A549 (cell line): ENCODE measurements at regions of chr3 and their contacts with region 1.

Region 1: DNA sequence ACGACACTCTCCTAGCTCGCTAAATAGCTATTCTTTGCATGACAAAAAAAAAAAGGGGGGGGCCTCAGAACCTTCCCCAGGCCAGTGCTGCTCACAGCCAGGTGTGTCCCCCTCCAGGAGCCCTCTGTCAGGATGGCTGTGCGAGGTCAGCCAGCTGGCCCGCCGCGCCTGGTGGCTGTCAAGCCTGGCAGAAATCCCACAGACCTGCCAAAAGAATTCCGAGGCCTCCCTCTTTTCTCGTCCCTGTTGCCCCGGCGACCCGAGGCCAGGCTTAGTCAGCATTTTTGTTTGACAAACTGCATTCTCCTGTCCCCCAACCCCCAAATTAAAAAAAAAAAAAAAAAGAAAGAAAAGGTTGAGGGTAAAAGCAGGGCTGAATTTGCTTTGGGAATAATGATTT is 61.9 kb downstream of the TM4SF4 start:
- DNase-seq: peak in 1 of 2 experiments; percentile 55
- ATAC-seq: peak; percentile 8 to 11; a peak in 3 of 6 replicates
- H3K4me3 ChIP-seq: peak overlapping the region; percentile 25; the same call in 1 of the 3 replicates
- H3K27ac ChIP-seq: peak overlapping the region; percentile 82 to 84
- H3K4me1 ChIP-seq: peaks cover 100% of the 10 kb centered on the region
- CTCF ChIP-seq: no peak
- EP300 ChIP-seq: 0 out of 5 replicates have a peak, but pooled peaks of 1 of the 2 experiments have one; percentile 12
- POLR2A ChIP-seq: no peak
- RAD21 ChIP-seq: no peak

Region 2: GRCh38 chr3:149393345-149394160 is 142.9 kb before region 1 on chr3:
- CTCF ChIA-PET with region 1: no interaction called
- POLR2A ChIA-PET with region 1: no interaction called
- DNase-seq: peak; percentile 71 to 89
- ATAC-seq: peak; percentile 76 to 81
- H3K4me3 ChIP-seq: no peak overlapping the region
- H3K27ac ChIP-seq: peak overlapping the region; percentile 20 to 55; a peak in 5 of 6 replicates
- H3K4me1 ChIP-seq: peaks cover 72% of the 10 kb centered on the region
- CTCF ChIP-seq: peak; percentile 97
- EP300 ChIP-seq: no peak
- POLR2A ChIP-seq: no peak
- RAD21 ChIP-seq: peak; percentile 97 to 98

Region 3: DNA sequence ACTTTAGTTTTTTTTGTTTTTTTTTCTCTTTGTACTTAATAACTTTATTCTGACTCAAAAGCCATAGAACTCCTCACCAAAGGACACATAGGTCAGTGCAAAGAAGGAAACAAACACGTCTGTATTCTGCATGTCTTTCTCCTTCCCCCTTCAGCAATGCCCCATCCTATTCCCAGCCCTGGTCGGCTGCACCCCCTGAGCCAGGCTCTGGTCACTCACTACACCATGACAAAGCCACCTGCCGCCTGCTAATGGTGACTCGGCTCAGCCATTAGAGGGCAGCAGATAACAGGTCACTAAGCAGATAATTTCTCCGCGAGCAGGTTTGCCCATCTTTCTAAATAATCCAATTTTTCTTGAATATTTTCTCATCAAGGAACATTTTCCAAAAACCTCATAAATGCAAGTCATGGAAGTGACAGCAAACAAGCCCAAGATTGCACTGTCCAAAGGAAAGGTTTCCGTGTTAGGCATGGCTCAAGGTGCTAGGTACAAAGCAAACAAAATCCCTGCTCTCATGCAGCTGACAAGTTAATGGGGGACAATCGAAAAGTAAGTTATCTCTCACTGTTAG is 24.1 kb before region 1 on chr3:
- CTCF ChIA-PET with region 1: interaction called, 14 read pairs
- POLR2A ChIA-PET with region 1: no interaction called
- DNase-seq: peak; percentile 78 to 82
- ATAC-seq: peak; percentile 86 to 87
- H3K4me3 ChIP-seq: no peak overlapping the region
- H3K27ac ChIP-seq: peak overlapping the region; percentile 54 to 58; a peak in 5 of 6 replicates
- H3K4me1 ChIP-seq: peaks cover 14% of the 10 kb centered on the region; the same call in 2 of the 3 replicates
- CTCF ChIP-seq: peak; percentile 94
- EP300 ChIP-seq: no peak
- POLR2A ChIP-seq: no peak
- RAD21 ChIP-seq: peak; percentile 97

Region 4: DNA sequence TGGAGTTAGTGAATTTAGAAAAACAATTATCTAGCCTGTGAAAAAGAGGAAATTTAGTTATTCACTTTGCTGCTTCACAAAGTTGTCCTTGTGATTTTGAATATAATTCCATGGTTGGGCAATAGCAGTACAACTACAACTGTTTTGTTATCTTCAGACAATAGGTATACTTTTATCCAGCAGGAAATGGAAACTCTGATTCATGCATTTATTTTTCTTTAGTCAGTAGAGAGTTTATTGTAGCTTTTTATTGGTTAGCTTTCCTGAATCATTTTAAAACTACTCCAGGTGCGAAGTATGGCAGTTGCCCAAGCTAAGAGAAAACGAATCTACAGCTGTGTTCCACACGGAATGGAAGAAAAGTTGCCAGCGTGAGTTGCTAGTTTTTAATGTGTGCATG is 18.4 kb after region 1 on chr3:
- CTCF ChIA-PET with region 1: interaction called, 10 read pairs
- POLR2A ChIA-PET with region 1: no interaction called
- DNase-seq: peak in 1 of 2 experiments; percentile 54
- ATAC-seq: peak; percentile 32 to 48; a peak in 2 of 6 replicates
- H3K4me3 ChIP-seq: no peak overlapping the region
- H3K27ac ChIP-seq: peak overlapping the region; percentile 64 to 79
- H3K4me1 ChIP-seq: peaks cover 76% of the 10 kb centered on the region
- CTCF ChIP-seq: no peak
- EP300 ChIP-seq: no peak
- POLR2A ChIP-seq: no peak
- RAD21 ChIP-seq: no peak

Region 5: GRCh38 chr3:149575961-149576564 is 39.6 kb after region 1 on chr3:
- CTCF ChIA-PET with region 1: interaction called, 21 read pairs
- POLR2A ChIA-PET with region 1: interaction called, 5 read pairs
- DNase-seq: peak; percentile 62 to 89
- ATAC-seq: peak; percentile 87 to 88
- H3K4me3 ChIP-seq: peak overlapping the region; percentile 15; the same call in 2 of the 3 replicates
- H3K27ac ChIP-seq: peak overlapping the region; percentile 94
- H3K4me1 ChIP-seq: peaks cover 98% of the 10 kb centered on the region
- CTCF ChIP-seq: no peak
- EP300 ChIP-seq: peak; percentile 80 to 91; a peak in 3 of 5 replicates
- POLR2A ChIP-seq: no peak
- RAD21 ChIP-seq: peak; percentile 33 to 49

Region 6: DNA sequence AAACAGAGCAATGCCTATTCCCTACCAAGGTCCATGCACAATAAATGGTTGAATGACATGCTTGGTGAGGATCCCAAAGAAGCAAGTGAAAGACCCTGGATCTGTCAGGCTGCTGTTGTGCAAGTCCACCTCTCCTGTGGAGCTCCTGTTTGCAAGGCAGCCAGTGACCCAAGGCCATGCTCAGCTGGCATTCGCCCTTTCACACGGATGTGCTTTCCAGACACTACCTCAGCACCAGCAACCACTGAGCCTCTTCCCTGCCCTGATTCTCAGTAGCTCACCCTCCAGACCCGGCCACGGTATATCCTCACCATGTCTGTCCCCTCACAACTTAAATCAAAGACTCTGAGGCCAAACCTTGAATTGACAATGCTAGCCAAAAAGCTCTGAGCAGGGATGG is 98.1 kb after region 1 on chr3:
- CTCF ChIA-PET with region 1: interaction called, 13 read pairs
- POLR2A ChIA-PET with region 1: no interaction called
- DNase-seq: no peak
- ATAC-seq: peak in 1 of 2 experiments; percentile 16; a peak in 2 of 6 replicates
- H3K4me3 ChIP-seq: no peak overlapping the region
- H3K27ac ChIP-seq: peak overlapping the region in 1 of 2 experiments; percentile 41; a peak in 2 of 6 replicates
- H3K4me1 ChIP-seq: peaks cover 34% of the 10 kb centered on the region
- CTCF ChIP-seq: no peak
- EP300 ChIP-seq: no peak
- POLR2A ChIP-seq: no peak
- RAD21 ChIP-seq: no peak

Region 7: DNA sequence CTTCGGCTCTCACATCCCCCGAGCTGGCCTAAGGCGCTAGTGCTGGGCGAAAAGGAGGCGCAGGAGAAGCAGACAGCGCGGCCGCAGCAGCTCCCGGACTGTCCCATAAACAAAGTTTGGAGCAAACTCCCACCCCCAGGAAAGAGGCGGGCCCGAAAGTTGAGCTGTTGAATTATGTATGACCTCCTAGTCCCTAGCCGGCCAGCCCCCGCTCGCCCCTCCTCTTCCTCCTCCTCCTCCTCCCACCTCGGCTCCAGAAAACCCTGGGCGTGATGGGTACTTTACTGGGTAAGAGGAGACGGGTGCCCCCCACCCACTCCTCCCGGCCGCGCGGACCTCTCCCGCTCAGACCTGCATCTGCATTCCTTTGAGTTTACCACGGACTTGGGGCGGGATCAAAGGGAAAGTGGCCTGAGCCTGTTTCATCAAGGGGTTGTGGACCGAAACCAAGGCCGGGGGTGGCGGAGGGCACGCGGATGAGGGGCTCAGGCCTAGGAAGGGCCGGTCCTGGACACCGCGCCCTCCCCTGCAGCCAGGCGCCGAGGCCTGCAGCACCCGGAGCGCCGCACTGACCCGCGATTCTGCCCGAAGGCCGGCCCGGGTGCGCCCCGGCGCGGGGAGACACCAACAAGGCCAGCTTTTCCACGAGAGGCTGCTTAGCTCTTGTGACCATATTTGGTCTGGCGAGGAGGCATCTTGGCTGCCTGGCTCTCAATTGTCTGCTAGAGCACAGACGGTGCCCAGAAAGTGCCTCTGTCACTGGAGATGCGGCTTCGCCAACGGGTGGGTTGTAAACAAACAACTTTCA is 121.7 kb after region 1 on chr3 and contains the start of gene WWTR1:
- CTCF ChIA-PET with region 1: interaction called, 35 read pairs
- POLR2A ChIA-PET with region 1: interaction called, 7 read pairs
- DNase-seq: peak; percentile 92 to 96
- ATAC-seq: peak; percentile 80 to 87
- H3K4me3 ChIP-seq: peak within 1 kb of the TSS; percentile 90
- H3K27ac ChIP-seq: peak within 1 kb of the TSS; percentile 99
- H3K4me1 ChIP-seq: peaks cover 57% of the 10 kb centered on the region
- CTCF ChIP-seq: no peak
- EP300 ChIP-seq: no peak
- POLR2A ChIP-seq: peak; percentile 66
- RAD21 ChIP-seq: peak; percentile 1 to 27; a peak in 1 of 5 replicates
- polyA plus RNA-seq, gene WWTR1: 164 and 216 TPM in 2 replicates

Region 8: DNA sequence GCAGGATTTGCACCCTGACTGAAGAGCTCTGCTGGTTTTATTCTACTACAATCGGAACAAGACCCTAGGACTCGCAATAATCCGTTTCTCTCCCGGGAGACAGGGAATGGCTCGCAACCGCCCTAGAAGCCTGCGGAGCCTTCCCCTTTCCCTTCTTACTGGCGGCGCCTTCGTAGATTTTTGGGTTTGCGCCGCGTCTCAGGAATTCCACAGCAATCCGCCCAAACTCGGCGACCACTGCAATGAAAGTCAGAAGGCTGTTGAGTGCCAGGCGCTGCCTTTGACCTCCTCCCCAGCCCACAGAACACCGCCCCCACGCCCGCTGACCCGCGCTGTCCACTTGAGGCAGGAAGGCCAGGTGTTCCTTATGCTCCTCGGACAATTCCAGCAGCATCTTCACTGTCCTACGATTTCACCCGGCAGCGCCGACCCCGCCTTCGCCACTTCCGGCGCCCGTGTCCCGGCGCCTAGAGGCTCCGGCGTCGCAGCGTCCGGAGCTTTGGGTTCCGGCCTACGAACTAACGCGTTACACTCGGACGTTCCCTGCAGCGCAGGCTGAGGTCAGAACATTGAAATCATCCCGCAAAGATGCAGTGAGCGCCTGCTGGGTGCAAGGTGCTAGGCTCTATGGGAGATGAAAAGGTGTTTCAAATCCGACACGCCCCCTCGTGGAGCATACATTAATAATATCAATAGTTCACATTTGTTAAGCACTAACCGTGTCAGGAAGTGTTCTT is 215.8 kb after region 1 on chr3 and contains the start of gene COMMD2:
- CTCF ChIA-PET with region 1: interaction called, 20 read pairs
- POLR2A ChIA-PET with region 1: interaction called, 5 read pairs
- DNase-seq: peak; percentile 82 to 94
- ATAC-seq: peak; percentile 100
- H3K4me3 ChIP-seq: peak within 1 kb of the TSS; percentile 76
- H3K27ac ChIP-seq: peak within 1 kb of the TSS; percentile 87 to 96
- H3K4me1 ChIP-seq: peaks cover 18% of the 10 kb centered on the region; the same call in 2 of the 3 replicates
- CTCF ChIP-seq: peak; percentile 44; the same call in 2 of the 3 replicates
- EP300 ChIP-seq: no peak
- POLR2A ChIP-seq: peak; percentile 86
- RAD21 ChIP-seq: peak; percentile 53 to 65; a peak in 4 of 5 replicates
- polyA plus RNA-seq, gene COMMD2: 71.5 and 76.1 TPM in 2 replicates